Natural killer cell (primary cell): ENCODE measurements at regions of chr20 and their contacts with region 1.

Region 1: GRCh38 chr20:24149881-24150307 is 161.3 kb upstream of the GGTLC1 start:
- DNase-seq: no peak
- ATAC-seq: no peak
- H3K4me3 ChIP-seq: no peak overlapping the region
- H3K4me3 Mint-ChIP-seq: no peak overlapping the region
- H3K27ac ChIP-seq: no peak overlapping the region
- H3K27ac Mint-ChIP-seq: peak overlapping the region; percentile 87 to 98
- H3K4me1 ChIP-seq: peaks cover 39% of the 10 kb centered on the region
- H3K4me1 Mint-ChIP-seq: peaks cover 74 to 78% of the 10 kb centered on the region in 2 donors
- H3K27me3 ChIP-seq: no peaks in the 10 kb centered on the region
- H3K27me3 Mint-ChIP-seq: peaks cover 0 to 11% of the 10 kb centered on the region in 2 donors
- CTCF ChIP-seq: peak; percentile 23

Region 2: GRCh38 chr20:24034820-24035219 is 115.1 kb before region 1 on chr20:
- intact Hi-C with region 1: loop called (anchors 10 kb)
- DNase-seq: no peak
- ATAC-seq: no peak
- H3K4me3 ChIP-seq: no peak overlapping the region
- H3K4me3 Mint-ChIP-seq: peak overlapping the region; percentile 11
- H3K27ac ChIP-seq: no peak overlapping the region
- H3K27ac Mint-ChIP-seq: peak overlapping the region in 1 of 2 donors; percentile 38
- H3K4me1 ChIP-seq: peaks cover 51% of the 10 kb centered on the region
- H3K4me1 Mint-ChIP-seq: peaks cover 40 to 68% of the 10 kb centered on the region in 2 donors
- H3K27me3 ChIP-seq: no peaks in the 10 kb centered on the region
- H3K27me3 Mint-ChIP-seq: no peaks in the 10 kb centered on the region
- CTCF ChIP-seq: no peak

Region 3: DNA sequence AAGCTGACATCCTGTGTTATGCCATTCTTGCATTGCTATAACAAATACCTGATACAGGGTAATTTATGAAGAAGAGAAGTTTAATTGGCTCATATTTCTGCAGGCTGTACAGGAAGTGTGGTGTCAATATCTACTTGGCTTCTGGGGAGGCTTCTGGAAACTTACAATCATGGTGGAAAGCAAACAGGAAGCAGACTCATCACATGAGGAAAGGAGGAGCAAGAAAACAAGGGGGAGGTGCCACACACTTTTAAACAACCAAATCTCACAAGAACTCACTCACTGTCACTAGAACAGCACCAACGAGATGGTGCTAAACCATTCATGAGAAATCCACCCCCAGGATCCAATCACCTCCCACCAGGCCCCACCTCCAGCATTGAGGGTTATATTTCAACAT is 18.2 kb before region 1 on chr20:
- intact Hi-C with region 1: loop called (anchors 2 kb)
- DNase-seq: no peak
- ATAC-seq: peak in 2 of 3 donors; percentile 70 to 77
- H3K4me3 ChIP-seq: no peak overlapping the region
- H3K4me3 Mint-ChIP-seq: peak overlapping the region; percentile 47
- H3K27ac ChIP-seq: peak overlapping the region; percentile 8
- H3K27ac Mint-ChIP-seq: peak overlapping the region; percentile 64 to 95
- H3K4me1 ChIP-seq: peaks cover 34% of the 10 kb centered on the region
- H3K4me1 Mint-ChIP-seq: peaks cover 51 to 52% of the 10 kb centered on the region in 2 donors
- H3K27me3 ChIP-seq: no peaks in the 10 kb centered on the region
- H3K27me3 Mint-ChIP-seq: no peaks in the 10 kb centered on the region
- CTCF ChIP-seq: no peak